ENCODE measurements at regions of chr7 and their contacts with region 1.

Region 1: GRCh38 chr7:26365077-26365900 is 73.6 kb downstream of the SNX10 start:
- DNase-seq: no peak

Region 2: GRCh38 chr7:26090927-26091519 is 274.3 kb before region 1 on chr7:
- intact Hi-C with region 1: loop called (anchors 5 to 10 kb)
- DNase-seq: no peak